A673 (cell line): ENCODE measurements at regions of chr1 and their contacts with region 1.

Region 1: GRCh38 chr1:64242895-64243756 is 39.7 kb downstream of the UBE2U start:
- DNase-seq: peak; percentile 75
- H3K4me3 ChIP-seq: peak overlapping the region; percentile 16
- H3K27ac ChIP-seq: peak overlapping the region; percentile 72
- H3K4me1 ChIP-seq: peaks cover 48% of the 10 kb centered on the region
- H3K27me3 ChIP-seq: no peaks in the 10 kb centered on the region
- CTCF ChIP-seq: peak; percentile 72

Region 2: GRCh38 chr1:63557365-63557987 is 685.6 kb before region 1 on chr1:
- CTCF ChIA-PET with region 1: interaction called, 3 read pairs
- POLR2A ChIA-PET with region 1: no interaction called
- intact Hi-C with region 1: loop called (anchors 5 kb)
- DNase-seq: peak; percentile 54
- H3K4me3 ChIP-seq: no peak overlapping the region
- H3K27ac ChIP-seq: no peak overlapping the region
- H3K4me1 ChIP-seq: no peaks in the 10 kb centered on the region
- H3K27me3 ChIP-seq: no peaks in the 10 kb centered on the region
- CTCF ChIP-seq: peak; percentile 71

Region 3: DNA sequence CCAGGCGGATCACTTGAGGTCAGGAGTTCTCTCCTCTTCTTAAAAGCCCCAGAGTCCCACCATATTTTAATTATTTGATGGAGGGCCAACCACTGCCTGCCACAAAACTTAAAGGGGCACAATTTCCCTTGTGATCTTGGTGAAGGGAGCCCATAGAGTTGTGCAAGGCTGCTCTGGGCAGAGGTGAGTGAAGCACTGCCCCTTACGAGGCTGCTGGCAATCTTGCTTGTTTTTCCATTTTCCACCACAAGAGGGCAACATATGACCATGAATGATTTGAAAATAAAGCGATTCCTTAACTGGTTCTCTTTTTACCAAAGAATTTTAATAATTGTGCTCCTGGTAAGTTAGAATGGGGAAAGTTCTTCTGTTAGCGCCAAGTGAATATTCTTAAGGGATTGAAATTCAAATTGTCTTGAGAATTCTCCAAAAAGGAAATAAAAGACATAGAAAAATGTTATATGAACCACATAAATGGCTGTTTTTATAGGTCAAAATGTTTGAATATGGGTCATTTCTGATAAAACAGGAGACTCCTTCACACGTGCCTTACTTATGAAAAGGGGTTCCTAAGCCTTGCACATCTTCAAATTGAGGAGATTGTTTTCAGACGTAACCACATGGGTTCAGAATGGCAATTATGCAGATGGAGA is 627.2 kb before region 1 on chr1:
- CTCF ChIA-PET with region 1: interaction called, 5 read pairs
- POLR2A ChIA-PET with region 1: no interaction called
- intact Hi-C with region 1: loop called (anchors 1 kb)
- DNase-seq: peak; percentile 81
- H3K4me3 ChIP-seq: no peak overlapping the region
- H3K27ac ChIP-seq: no peak overlapping the region
- H3K4me1 ChIP-seq: no peaks in the 10 kb centered on the region
- H3K27me3 ChIP-seq: no peaks in the 10 kb centered on the region
- CTCF ChIP-seq: peak; percentile 73

Region 4: DNA sequence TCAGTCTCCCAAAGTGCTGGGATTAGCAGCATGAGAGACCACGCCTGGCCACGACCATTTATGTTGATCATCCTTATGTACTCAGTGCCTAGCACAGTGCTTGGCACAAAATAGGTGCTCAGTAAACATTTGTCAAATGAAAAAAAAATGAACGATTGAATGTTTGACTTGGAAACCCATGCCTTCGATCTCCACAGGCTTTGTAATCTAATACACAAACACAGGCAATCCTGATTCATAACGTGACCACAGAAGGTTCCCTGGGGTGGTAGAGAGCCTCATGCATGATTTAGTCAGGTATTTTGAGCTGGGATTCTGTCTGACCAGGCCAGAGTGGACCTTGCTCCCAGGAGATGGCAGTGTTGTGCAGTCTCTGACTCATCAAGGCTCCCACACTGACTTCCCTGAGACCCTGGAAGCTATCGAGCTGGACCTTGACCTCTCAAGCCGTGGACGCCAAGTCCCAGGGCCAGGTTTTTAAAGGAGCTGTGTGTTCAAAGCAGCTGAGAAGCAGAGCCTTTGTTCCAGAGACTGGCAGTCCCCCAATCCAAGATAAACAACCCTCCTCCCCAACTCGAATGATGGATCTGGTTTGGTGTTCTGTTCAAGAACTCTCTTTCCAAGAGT is 568.8 kb before region 1 on chr1:
- CTCF ChIA-PET with region 1: interaction called, 6 read pairs
- POLR2A ChIA-PET with region 1: no interaction called
- intact Hi-C with region 1: loop called (anchors 5 kb)
- DNase-seq: peak; percentile 60
- H3K4me3 ChIP-seq: no peak overlapping the region
- H3K27ac ChIP-seq: no peak overlapping the region
- H3K4me1 ChIP-seq: no peaks in the 10 kb centered on the region
- H3K27me3 ChIP-seq: no peaks in the 10 kb centered on the region
- CTCF ChIP-seq: peak; percentile 63